Activated B cell treated with CpG ODN at 0.5 μM for 24 hours (primary cell): ENCODE measurements at regions of chr10 and their contacts with region 1.

Region 1: DNA sequence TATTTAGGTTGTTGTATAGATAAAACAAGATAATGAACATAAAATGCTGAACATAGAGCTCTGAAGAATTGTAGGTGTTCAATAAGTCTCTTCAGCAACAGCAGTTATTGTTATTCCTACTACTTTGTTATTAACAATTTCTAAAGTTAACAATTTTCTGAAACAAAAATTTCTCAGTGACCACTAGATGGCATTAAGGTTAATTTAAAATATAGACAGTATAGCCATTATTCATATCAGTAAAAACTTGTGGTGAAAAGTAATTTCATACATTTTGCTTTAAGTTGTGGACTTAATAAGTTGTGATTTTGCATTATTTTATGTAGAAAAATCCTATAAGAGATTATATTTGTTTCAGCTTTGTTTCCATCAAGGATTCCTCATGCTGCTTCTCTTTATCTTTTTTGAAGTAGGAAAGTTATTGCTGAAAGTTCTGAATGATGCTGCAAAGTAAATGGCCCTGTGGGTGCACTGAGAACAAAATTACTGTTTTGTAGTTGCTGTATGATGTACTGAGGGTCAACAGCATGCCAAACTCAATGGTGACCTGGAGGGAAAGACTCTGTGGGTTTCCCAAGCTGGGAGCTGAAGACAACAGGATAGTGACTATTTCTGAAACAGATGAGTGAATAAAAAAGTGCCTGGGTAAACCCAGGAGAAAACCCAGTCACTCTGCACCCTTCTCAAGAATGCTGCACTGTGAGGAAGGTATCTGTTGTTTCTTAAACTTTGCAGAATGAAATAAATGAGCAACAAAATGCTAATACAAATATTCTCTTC is 253.6 kb downstream of the KIF20B start:
- DNase-seq: no peak
- ATAC-seq: no peak
- H3K4me3 Mint-ChIP-seq: no peak overlapping the region
- H3K27ac Mint-ChIP-seq: no peak overlapping the region
- H3K4me1 Mint-ChIP-seq: peaks cover 10% of the 10 kb centered on the region
- H3K27me3 Mint-ChIP-seq: no peaks in the 10 kb centered on the region
- CTCF ChIP-seq: peak; percentile 35

Region 2: GRCh38 chr10:90047243-90047729 is 92.3 kb after region 1 on chr10:
- CTCF ChIA-PET with region 1: no interaction called
- POLR2A ChIA-PET with region 1: no interaction called
- intact Hi-C with region 1: no loop called
- DNase-seq: no peak
- ATAC-seq: peak; percentile 82
- H3K4me3 Mint-ChIP-seq: peak overlapping the region; percentile 68
- H3K27ac Mint-ChIP-seq: peak overlapping the region; percentile 94
- H3K4me1 Mint-ChIP-seq: peaks cover 44% of the 10 kb centered on the region
- H3K27me3 Mint-ChIP-seq: no peaks in the 10 kb centered on the region
- CTCF ChIP-seq: no peak

Region 3: GRCh38 chr10:90087197-90088007 is 132.4 kb after region 1 on chr10:
- CTCF ChIA-PET with region 1: no interaction called
- POLR2A ChIA-PET with region 1: interaction called, 4 read pairs
- intact Hi-C with region 1: loop called (anchors 1 kb)
- DNase-seq: no peak
- ATAC-seq: peak; percentile 67
- H3K4me3 Mint-ChIP-seq: no peak overlapping the region
- H3K27ac Mint-ChIP-seq: no peak overlapping the region
- H3K4me1 Mint-ChIP-seq: peaks cover 6% of the 10 kb centered on the region
- H3K27me3 Mint-ChIP-seq: no peaks in the 10 kb centered on the region
- CTCF ChIP-seq: no peak

Region 4: GRCh38 chr10:90138844-90139243 is 183.9 kb after region 1 on chr10:
- CTCF ChIA-PET with region 1: interaction called, 5 read pairs
- POLR2A ChIA-PET with region 1: no interaction called
- intact Hi-C with region 1: loop called (anchors 1 kb)
- DNase-seq: no peak
- ATAC-seq: peak; percentile 42
- H3K4me3 Mint-ChIP-seq: no peak overlapping the region
- H3K27ac Mint-ChIP-seq: no peak overlapping the region
- H3K4me1 Mint-ChIP-seq: no peaks in the 10 kb centered on the region
- H3K27me3 Mint-ChIP-seq: peaks cover 2% of the 10 kb centered on the region
- CTCF ChIP-seq: no peak

Region 5: GRCh38 chr10:90592638-90593302 is 637.8 kb after region 1 on chr10:
- CTCF ChIA-PET with region 1: interaction called, 3 read pairs
- POLR2A ChIA-PET with region 1: no interaction called
- intact Hi-C with region 1: loop called (anchors 1 kb)
- DNase-seq: no peak
- ATAC-seq: peak; percentile 54
- H3K4me3 Mint-ChIP-seq: no peak overlapping the region
- H3K27ac Mint-ChIP-seq: no peak overlapping the region
- H3K4me1 Mint-ChIP-seq: no peaks in the 10 kb centered on the region
- H3K27me3 Mint-ChIP-seq: peaks cover 2% of the 10 kb centered on the region
- CTCF ChIP-seq: no peak

Region 6: GRCh38 chr10:90787393-90788198 is 832.6 kb after region 1 on chr10:
- CTCF ChIA-PET with region 1: no interaction called
- POLR2A ChIA-PET with region 1: no interaction called
- intact Hi-C with region 1: loop called (anchors 2 kb)
- DNase-seq: no peak
- ATAC-seq: no peak
- H3K4me3 Mint-ChIP-seq: no peak overlapping the region
- H3K27ac Mint-ChIP-seq: no peak overlapping the region
- H3K4me1 Mint-ChIP-seq: peaks cover 12% of the 10 kb centered on the region
- H3K27me3 Mint-ChIP-seq: peaks cover 2% of the 10 kb centered on the region
- CTCF ChIP-seq: no peak

Region 7: DNA sequence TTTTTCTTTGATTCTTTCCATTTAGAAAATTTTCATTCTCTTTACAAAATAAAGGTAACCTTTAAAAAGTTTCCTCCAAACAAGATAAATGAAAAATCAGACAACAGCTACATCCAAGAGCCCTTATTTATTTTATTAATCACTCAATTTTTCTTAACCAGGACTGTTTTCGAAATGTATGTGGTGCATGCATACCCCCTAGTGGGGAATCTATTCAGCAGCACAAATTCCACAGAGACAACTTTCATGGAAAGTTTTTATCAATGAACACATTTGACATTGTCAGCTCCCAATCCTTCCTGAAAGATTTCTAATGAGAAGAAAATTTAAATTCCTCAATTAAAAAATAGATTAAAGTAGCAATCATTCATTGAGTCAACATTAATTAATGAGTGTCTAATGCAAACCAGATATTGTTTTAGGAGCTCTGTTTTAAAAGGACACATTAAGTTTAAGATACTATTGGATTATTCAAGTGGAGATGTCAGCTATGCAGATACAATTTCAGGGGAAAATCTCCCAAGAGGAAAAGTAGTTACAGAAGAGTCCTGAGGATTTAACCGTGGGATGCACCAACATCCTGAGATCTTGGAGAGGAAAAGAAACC is 908.0 kb after region 1 on chr10:
- CTCF ChIA-PET with region 1: no interaction called
- POLR2A ChIA-PET with region 1: no interaction called
- intact Hi-C with region 1: loop called (anchors 5 kb)
- DNase-seq: no peak
- ATAC-seq: no peak
- H3K4me3 Mint-ChIP-seq: no peak overlapping the region
- H3K27ac Mint-ChIP-seq: no peak overlapping the region
- H3K4me1 Mint-ChIP-seq: peaks cover 3% of the 10 kb centered on the region
- H3K27me3 Mint-ChIP-seq: peaks cover 23% of the 10 kb centered on the region
- CTCF ChIP-seq: peak; percentile 15